GM10248 (cell line): ENCODE measurements at regions of chr16 and their contacts with region 1.

Region 1: DNA sequence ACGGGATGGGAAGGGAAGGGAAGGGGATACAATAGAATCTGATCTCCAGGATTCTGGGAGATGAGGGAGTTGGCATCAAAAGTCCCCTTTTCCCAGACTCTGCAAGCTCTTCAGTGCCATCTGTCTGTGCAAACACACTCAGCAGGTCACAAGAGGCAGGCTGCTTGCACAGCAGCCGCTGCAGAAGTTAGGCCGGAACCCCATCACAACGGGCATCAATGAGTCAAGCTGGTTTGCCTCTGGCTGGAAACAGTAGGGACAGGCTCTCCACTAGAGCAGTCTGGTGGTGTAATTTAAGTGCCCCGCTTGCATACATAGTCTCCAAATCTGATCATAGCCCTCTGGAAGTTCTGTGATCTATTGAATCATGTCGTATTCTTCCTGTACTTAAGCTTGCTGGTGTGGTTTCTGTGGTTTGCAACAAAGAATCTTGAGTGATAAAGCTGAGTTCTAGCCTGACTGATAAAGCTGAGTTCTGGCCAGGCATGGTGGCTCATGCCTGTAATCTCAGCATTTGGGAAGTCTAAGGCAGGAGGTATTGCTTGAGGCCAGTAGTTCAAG is 33.7 kb upstream of the KDM8 start:
- DNase-seq: no peak
- CTCF ChIP-seq: no peak

Region 2: GRCh38 chr16:27154705-27155521 is 14.7 kb before region 1 on chr16:
- CTCF ChIA-PET with region 1: interaction called, 29 read pairs
- POLR2A ChIA-PET with region 1: no interaction called
- DNase-seq: peak; percentile 78
- CTCF ChIP-seq: peak; percentile 95